ENCODE measurements at regions of chr9 and their contacts with region 1.

Region 1: DNA sequence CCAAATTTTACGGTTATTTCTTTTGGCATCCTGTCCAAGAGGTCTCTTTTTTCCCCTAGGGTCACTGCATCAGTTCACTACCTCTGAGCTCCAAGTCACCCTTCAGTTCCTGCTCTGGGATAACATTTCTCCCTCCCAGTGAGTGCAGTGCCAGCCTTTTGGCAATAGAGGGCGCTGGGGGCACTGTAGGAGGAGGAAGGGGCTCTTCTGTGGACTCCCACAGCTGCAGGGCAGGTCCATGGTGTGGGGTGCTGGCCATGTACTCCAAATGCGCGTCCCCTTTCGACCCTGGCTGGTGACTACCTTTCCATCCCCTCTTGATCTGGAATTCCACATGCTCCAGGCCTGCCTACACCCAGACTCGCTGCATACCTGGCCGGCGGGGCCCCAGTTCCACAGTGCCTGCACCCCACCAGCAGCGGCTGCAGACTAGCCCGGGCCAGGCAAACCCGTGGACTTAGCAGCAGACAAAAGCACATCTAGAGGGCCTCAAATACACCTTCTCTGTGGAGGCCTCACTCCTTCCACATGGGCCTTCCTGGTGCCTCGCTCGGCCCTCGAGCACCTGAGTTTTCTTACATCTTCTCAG is 20.4 kb upstream of the NINJ1 start:
- DNase-seq: peak; percentile 91
- ATAC-seq: peak; percentile 93
- H3K4me3 Mint-ChIP-seq: no peak overlapping the region
- H3K27ac Mint-ChIP-seq: no peak overlapping the region
- H3K4me1 Mint-ChIP-seq: no peaks in the 10 kb centered on the region
- H3K27me3 Mint-ChIP-seq: peaks cover 2% of the 10 kb centered on the region; the same call in 1 of the 2 replicates
- CTCF ChIP-seq: peak; percentile 92

Region 2: DNA sequence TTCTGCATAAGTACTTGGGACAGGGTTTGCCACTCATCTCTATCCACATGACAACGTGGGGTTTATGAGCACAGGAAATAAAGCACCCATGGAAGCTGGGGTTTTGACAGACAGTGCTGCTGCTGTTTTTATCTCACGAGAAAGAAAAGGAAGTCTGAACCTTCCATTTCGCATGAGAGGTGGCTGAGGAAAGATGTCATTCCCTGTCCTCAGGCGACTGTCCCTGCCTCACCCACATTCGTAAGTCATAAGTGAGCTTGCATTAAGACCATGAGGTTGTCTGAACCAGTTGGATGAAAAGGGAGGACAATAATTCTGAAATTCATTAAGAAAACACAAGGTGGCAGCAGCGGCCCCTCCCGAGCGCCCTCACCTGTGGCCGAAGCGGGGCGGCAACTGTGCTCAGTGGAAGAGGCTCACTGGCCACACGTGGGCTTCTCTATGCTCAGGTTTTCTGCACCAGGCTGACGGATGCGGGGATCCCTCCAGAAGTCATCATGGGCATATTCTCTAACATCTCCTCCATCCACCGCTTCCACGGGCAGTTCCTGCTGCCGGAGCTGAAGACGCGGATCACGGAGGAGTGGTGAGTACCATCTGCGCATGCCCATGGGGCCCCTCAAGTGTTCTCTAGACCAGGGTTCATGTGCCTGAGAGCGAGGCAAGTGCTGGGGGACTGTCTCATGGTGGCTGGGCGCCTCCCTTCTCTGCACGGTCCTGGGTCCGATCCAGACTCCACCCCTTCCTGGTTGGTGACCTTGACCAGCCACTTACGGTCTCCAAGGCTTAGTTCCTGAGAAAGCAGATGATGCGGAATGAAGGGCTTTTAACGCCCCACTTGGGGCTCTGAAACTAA is 150.6 kb before region 1 on chr9:
- CTCF ChIA-PET with region 1: interaction called, 11 read pairs
- POLR2A ChIA-PET with region 1: no interaction called
- DNase-seq: peak; percentile 77
- ATAC-seq: peak; percentile 97
- H3K4me3 Mint-ChIP-seq: no peak overlapping the region
- H3K27ac Mint-ChIP-seq: no peak overlapping the region
- H3K4me1 Mint-ChIP-seq: peaks cover 15% of the 10 kb centered on the region
- H3K27me3 Mint-ChIP-seq: peaks cover 7% of the 10 kb centered on the region
- CTCF ChIP-seq: peak; percentile 53; the same call in 1 of the 2 replicates

Region 3: GRCh38 chr9:93126825-93127368 is 27.5 kb before region 1 on chr9:
- CTCF ChIA-PET with region 1: interaction called, 17 read pairs
- POLR2A ChIA-PET with region 1: no interaction called
- DNase-seq: no peak
- ATAC-seq: peak; percentile 54
- H3K4me3 Mint-ChIP-seq: no peak overlapping the region
- H3K27ac Mint-ChIP-seq: peak overlapping the region; percentile 78
- H3K4me1 Mint-ChIP-seq: peaks cover 24% of the 10 kb centered on the region
- H3K27me3 Mint-ChIP-seq: no peaks in the 10 kb centered on the region
- CTCF ChIP-seq: no peak

Region 4: DNA sequence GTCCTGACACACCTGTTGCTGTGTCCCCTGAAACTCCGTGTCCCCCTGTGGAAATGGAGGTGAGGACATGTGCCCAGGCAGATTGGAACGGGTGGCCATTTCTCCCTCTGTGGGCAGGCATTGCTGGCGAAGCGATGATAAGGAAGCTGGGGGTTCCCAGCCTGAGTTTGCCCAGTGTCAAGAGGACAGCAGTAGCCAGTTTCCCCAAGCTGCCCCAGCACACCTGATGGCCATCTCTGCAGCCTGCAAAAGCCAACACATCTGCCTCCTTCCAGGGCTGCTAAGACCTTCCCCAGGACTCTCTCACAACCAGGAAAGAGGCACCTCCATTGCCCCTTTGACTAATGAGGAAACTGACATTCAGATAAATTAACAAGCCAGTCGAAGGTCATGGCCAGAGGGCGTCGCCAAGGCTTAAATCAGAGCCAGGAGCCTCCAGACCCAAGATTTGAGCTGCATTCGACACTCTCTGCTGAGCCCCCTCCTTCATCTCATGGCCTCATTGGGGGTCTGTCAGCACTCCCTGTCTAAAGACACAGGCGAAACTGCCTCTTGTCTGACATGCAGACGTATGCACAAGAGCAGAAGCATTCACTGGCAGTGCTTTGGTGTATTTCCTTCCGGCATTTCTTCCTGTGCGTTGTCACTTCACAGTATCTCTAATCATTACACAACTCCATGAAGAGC is 19.1 kb after region 1 on chr9:
- CTCF ChIA-PET with region 1: interaction called, 13 read pairs
- POLR2A ChIA-PET with region 1: no interaction called
- DNase-seq: no peak
- ATAC-seq: no peak
- H3K4me3 Mint-ChIP-seq: no peak overlapping the region
- H3K27ac Mint-ChIP-seq: no peak overlapping the region
- H3K4me1 Mint-ChIP-seq: no peaks in the 10 kb centered on the region
- H3K27me3 Mint-ChIP-seq: peaks cover 3% of the 10 kb centered on the region; the same call in 1 of the 2 replicates
- CTCF ChIP-seq: no peak

Region 5: DNA sequence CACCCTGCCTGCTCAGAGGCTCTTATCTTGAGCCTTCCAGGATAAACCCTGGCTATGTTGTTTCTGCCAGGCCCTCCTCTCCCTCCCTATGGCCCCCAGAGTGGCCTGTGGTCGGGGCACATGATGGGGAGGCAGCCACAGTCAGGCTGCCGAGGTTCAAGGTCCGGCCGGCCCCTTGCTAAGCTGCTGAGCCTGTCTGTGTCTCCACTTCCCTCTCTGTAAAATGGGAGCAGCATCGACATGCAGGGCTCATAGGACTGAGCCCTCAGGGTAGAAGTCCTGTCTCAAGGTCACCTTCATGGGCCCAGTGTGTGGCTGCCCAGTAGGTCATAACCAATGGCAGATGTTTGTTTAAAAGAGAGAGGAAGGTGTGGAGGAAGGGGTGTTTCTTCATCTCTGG is 58.0 kb after region 1 on chr9:
- CTCF ChIA-PET with region 1: no interaction called
- POLR2A ChIA-PET with region 1: no interaction called
- DNase-seq: no peak
- ATAC-seq: no peak
- H3K4me3 Mint-ChIP-seq: no peak overlapping the region
- H3K27ac Mint-ChIP-seq: no peak overlapping the region
- H3K4me1 Mint-ChIP-seq: no peaks in the 10 kb centered on the region
- H3K27me3 Mint-ChIP-seq: no peaks in the 10 kb centered on the region
- CTCF ChIP-seq: no peak

Region 6: GRCh38 chr9:93231121-93231694 is 76.8 kb after region 1 on chr9:
- CTCF ChIA-PET with region 1: interaction called, 14 read pairs
- POLR2A ChIA-PET with region 1: no interaction called
- DNase-seq: no peak
- ATAC-seq: no peak
- H3K4me3 Mint-ChIP-seq: no peak overlapping the region
- H3K27ac Mint-ChIP-seq: no peak overlapping the region; the same call in 1 of the 2 replicates
- H3K4me1 Mint-ChIP-seq: peaks cover 4% of the 10 kb centered on the region; the same call in 1 of the 2 replicates
- H3K27me3 Mint-ChIP-seq: no peaks in the 10 kb centered on the region
- CTCF ChIP-seq: no peak

Region 7: DNA sequence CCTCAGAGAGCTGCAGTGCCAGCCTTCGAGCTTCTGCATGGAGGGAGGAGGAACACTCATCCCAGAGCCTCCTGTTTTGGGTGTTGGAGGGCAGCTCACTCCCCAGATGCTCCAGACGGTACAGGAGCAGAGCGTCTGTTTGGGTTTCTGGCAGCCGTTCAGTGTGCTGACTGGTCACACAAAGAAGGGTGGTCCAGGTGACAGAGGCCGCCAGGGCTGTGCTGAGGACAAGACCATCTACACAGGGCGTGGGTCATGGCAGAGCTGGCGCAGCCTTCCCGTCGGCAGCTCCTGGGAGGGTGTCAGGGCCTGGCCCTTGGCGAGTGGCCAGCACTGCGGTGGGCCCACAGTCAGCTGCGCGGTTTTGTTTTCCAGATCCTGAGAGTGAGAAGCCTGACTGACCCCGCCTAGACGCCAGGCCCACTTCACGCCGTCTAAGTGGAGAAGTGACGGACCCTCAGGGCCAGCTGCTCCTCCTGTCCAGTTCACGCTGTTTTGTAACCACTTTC is 165.6 kb after region 1 on chr9:
- CTCF ChIA-PET with region 1: interaction called, 10 read pairs
- POLR2A ChIA-PET with region 1: no interaction called
- DNase-seq: no peak
- ATAC-seq: no peak
- H3K4me3 Mint-ChIP-seq: no peak overlapping the region
- H3K27ac Mint-ChIP-seq: no peak overlapping the region
- H3K4me1 Mint-ChIP-seq: peaks cover 9% of the 10 kb centered on the region
- H3K27me3 Mint-ChIP-seq: no peaks in the 10 kb centered on the region
- CTCF ChIP-seq: no peak

Region 8: GRCh38 chr9:93365427-93366118 is 211.2 kb after region 1 on chr9:
- CTCF ChIA-PET with region 1: no interaction called
- POLR2A ChIA-PET with region 1: no interaction called
- DNase-seq: peak; percentile 38
- ATAC-seq: peak; percentile 63
- H3K4me3 Mint-ChIP-seq: peak overlapping the region; percentile 32
- H3K27ac Mint-ChIP-seq: peak overlapping the region; percentile 78
- H3K4me1 Mint-ChIP-seq: peaks cover 13% of the 10 kb centered on the region
- H3K27me3 Mint-ChIP-seq: peaks cover 33% of the 10 kb centered on the region
- CTCF ChIP-seq: no peak

Measured in WTC11 (cell line).